Activated CD8-positive, alpha-beta T cell treated with anti-CD3 and anti-CD28 coated beads for 36 hours (primary cell): ENCODE measurements at regions of chr3 and their contacts with region 1.

Region 1: GRCh38 chr3:129439817-129440617 is at the starts of genes IFT122 and MBD4:
- DNase-seq: peak; percentile 99
- ATAC-seq: peak; percentile 91
- H3K4me3 Mint-ChIP-seq: peak within 1 kb of the TSS; percentile 83
- H3K27ac Mint-ChIP-seq: peak within 1 kb of the TSS; percentile 89
- H3K4me1 Mint-ChIP-seq: peaks cover 52% of the 10 kb centered on the region
- H3K27me3 Mint-ChIP-seq: no peaks in the 10 kb centered on the region
- CTCF ChIP-seq: no peak
- total RNA-seq, gene IFT122: 18.9 to 20.4 TPM
- total RNA-seq, gene MBD4: 38.9 to 44.5 TPM

Region 2: GRCh38 chr3:129383292-129383860 is 56.6 kb before region 1 on chr3:
- CTCF ChIA-PET with region 1: interaction called, 11 read pairs
- POLR2A ChIA-PET with region 1: no interaction called
- intact Hi-C with region 1: no loop called
- DNase-seq: peak; percentile 67
- ATAC-seq: peak; percentile 98
- H3K4me3 Mint-ChIP-seq: no peak overlapping the region
- H3K27ac Mint-ChIP-seq: no peak overlapping the region
- H3K4me1 Mint-ChIP-seq: peaks cover 3% of the 10 kb centered on the region
- H3K27me3 Mint-ChIP-seq: no peaks in the 10 kb centered on the region
- CTCF ChIP-seq: peak; percentile 73

Region 3: DNA sequence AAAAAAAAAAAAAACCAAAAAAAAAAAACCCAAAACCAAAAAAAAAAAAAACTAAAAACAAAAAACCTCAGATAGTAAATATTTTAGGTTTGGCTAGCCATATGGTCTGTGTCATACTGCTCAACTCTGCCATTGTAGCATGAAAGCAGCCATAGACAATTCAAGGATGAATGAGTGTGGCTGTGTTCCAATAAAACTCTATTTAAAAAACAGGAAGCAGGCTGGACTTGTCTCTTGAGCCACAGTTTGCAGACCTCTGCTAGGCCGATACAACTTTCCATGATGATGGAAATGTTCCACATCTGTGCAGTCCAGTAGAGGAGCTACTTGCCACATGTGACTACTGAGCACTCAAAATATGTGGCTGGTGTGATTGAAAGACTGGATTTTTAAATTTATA is 22.7 kb before region 1 on chr3:
- CTCF ChIA-PET with region 1: no interaction called
- POLR2A ChIA-PET with region 1: no interaction called
- intact Hi-C with region 1: no loop called
- DNase-seq: no peak
- ATAC-seq: no peak
- H3K4me3 Mint-ChIP-seq: no peak overlapping the region
- H3K27ac Mint-ChIP-seq: no peak overlapping the region
- H3K4me1 Mint-ChIP-seq: no peaks in the 10 kb centered on the region
- H3K27me3 Mint-ChIP-seq: no peaks in the 10 kb centered on the region
- CTCF ChIP-seq: no peak

Region 4: GRCh38 chr3:129428376-129429079 is 11.5 kb before region 1 on chr3 and contains the start of gene EFCAB12:
- CTCF ChIA-PET with region 1: interaction called, 11 read pairs
- POLR2A ChIA-PET with region 1: interaction called, 35 read pairs
- intact Hi-C with region 1: no loop called
- DNase-seq: peak; percentile 93
- ATAC-seq: peak; percentile 96
- H3K4me3 Mint-ChIP-seq: peak within 1 kb of the TSS; percentile 61
- H3K27ac Mint-ChIP-seq: peak within 1 kb of the TSS; percentile 58
- H3K4me1 Mint-ChIP-seq: peaks cover 36% of the 10 kb centered on the region
- H3K27me3 Mint-ChIP-seq: peaks cover 2% of the 10 kb centered on the region
- CTCF ChIP-seq: no peak
- total RNA-seq, gene EFCAB12: 0.56 to 0.65 TPM

Region 5: DNA sequence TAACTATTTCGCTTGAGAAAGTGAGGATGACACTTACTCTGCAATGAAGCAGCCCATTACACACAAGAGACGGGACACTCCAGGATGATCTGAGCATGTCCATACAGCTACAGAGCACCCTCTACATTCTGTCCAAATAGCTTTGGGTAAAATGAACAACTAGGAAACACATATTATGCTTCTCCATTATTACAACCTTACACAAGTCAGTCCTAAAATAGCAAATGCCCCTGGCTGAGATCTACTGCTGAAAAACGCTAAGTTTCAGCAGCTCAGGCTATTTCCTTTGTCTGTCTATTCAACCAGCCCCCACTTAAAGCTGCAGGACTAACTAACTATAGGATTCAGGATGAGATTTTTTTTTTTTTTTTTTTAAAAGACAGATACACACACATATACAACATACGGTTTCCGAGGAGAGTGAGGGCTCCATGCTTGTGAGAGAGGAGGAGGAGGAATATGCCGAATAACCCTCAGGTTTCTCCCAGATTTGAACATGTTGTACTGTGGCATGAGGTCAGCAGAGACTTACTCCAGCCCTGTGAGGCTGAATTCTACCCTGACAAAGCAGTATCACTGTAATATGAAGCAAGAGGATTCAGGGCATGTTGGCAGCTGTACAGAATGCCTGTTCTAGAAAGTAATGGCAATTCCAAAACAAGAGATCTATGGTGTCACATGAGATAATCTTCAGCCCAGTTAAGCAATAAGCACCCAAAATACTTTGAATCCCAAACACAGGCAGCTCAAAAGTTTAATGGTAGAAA is 283.7 kb after region 1 on chr3:
- CTCF ChIA-PET with region 1: no interaction called
- POLR2A ChIA-PET with region 1: no interaction called
- intact Hi-C with region 1: no loop called
- DNase-seq: no peak
- ATAC-seq: no peak
- H3K4me3 Mint-ChIP-seq: no peak overlapping the region
- H3K27ac Mint-ChIP-seq: no peak overlapping the region
- H3K4me1 Mint-ChIP-seq: no peaks in the 10 kb centered on the region
- H3K27me3 Mint-ChIP-seq: no peaks in the 10 kb centered on the region
- CTCF ChIP-seq: no peak